ENCODE measurements at regions of chr11 and their contacts with region 1.

Region 1: DNA sequence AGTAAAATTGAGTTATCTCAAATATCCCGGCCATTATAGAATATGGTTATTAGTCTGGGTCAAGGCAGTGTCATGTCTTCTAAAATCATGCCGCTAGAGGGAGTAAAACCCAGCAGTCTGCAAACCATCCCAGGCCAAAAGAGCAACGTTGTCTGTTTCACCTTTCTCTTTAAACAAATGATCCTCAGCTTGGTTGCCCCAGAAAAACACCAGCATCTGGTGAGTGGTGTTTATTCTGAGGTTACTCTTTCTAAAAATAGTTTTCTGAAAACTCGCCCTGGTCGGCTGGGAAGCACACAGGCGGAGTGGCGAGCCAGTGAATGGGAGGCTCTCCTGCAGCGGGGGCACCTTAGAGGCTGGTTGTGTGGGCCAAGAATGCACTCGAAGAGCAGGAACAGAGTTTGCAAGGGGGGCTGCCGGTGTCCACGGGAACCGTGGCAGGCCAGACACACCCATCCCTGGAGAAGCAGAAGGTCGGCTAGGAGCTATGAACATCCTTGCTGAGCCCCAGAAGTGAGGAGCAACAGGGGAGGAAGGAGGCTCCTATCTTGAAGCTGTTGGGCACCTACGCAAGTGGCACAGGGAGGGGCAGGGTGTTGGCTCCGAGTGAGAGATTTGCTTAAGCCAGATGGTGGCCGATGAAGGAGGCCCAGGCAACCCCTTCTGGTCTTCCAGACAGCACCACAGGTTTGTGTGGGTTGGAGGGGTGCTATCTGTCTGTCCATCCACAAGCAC is 297.1 kb downstream of the ETS1 start:
- DNase-seq: no peak
- ATAC-seq: peak; percentile 82

Region 2: GRCh38 chr11:128098781-128099180 is 191.5 kb before region 1 on chr11:
- intact Hi-C with region 1: no loop called
- DNase-seq: no peak
- ATAC-seq: no peak

Region 3: GRCh38 chr11:128334311-128335044 is 44.2 kb after region 1 on chr11:
- intact Hi-C with region 1: loop called (anchors 5 kb)
- DNase-seq: no peak
- ATAC-seq: peak; percentile 52

Region 4: DNA sequence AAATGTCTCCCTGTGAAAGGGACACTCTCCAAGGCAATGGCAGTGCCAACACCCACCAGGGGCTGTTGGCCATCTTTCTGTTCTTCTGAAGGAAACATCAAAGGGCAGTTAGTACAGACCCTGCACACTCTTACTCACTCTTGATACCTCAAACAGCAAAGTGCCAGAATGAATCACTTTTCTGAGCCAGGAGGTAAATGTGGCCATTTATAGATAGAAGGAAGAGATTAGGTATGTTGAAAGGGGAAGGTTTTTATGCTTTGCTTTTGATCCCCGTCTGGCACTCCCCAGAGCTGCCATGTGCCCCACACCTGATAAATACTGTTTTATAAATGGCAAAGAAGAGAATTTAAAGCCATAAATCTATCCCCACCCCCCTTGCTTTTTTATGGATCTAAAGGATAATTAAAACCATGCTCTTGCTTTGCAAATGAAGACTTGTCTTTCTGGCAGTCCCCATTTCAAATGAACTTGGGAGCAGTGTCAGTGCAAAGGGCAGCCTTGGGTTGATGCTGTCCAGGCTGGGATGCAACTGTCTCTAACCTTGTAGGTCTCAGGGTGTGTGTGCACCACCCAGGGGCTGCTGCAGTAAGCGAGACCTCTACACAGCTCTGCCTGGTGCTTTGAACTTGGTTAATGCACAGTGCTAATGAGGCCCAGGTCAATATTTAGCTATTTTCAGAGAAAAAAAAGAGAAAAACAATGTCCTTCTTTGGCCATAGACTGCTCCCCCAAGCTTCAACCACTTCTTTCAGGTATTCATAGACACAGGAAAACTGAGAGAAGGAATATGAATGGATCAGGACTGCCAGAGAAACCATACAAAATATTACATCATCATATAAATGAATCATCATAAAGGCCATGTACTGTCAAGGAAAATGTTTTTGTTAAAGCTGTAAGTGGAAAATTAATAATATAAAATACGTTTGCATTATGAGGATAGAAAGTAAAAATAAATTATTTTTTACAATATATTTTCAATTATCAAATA is 89.6 kb after region 1 on chr11:
- intact Hi-C with region 1: no loop called
- DNase-seq: no peak
- ATAC-seq: no peak

Region 5: DNA sequence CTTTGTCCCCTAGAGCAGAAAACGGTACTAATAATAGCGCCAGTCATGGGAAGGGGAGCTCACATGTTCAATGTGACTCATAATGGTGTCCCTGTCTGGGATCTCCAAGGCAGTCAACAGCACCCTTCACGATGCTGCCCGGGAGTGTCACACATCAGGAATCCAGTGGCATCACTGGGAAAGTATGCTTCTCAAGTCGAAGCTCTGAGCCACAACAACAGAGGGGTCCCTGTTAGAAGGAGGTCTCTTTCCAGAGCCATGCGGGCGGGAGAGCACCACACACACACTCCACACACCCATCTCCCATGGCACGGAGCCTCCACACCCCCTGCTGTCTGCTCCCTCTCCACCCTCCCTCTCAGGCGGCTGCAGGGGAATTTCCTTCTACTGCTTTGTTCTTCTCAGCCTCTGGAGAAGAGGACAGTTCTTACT is 177.4 kb after region 1 on chr11:
- intact Hi-C with region 1: loop called (anchors 2 kb)
- DNase-seq: no peak
- ATAC-seq: no peak

Region 6: GRCh38 chr11:128630367-128631230 is 340.3 kb after region 1 on chr11:
- intact Hi-C with region 1: loop called (anchors 1 kb)
- DNase-seq: peak; percentile 93
- ATAC-seq: peak; percentile 95

Measured in Right ventricle myocardium inferior (tissue), 1 donor.